HEK293 (cell line): ENCODE measurements at regions of chr15 and their contacts with region 1.

Region 1: GRCh38 chr15:75453703-75454470 is 2.4 kb upstream of the SIN3A start:
- H3K4me3 ChIP-seq: peak overlapping the region; percentile 70
- H3K27ac ChIP-seq: peak overlapping the region; percentile 87
- H3K4me1 ChIP-seq: peaks cover 15% of the 10 kb centered on the region
- CTCF ChIP-seq: no peak

Region 2: DNA sequence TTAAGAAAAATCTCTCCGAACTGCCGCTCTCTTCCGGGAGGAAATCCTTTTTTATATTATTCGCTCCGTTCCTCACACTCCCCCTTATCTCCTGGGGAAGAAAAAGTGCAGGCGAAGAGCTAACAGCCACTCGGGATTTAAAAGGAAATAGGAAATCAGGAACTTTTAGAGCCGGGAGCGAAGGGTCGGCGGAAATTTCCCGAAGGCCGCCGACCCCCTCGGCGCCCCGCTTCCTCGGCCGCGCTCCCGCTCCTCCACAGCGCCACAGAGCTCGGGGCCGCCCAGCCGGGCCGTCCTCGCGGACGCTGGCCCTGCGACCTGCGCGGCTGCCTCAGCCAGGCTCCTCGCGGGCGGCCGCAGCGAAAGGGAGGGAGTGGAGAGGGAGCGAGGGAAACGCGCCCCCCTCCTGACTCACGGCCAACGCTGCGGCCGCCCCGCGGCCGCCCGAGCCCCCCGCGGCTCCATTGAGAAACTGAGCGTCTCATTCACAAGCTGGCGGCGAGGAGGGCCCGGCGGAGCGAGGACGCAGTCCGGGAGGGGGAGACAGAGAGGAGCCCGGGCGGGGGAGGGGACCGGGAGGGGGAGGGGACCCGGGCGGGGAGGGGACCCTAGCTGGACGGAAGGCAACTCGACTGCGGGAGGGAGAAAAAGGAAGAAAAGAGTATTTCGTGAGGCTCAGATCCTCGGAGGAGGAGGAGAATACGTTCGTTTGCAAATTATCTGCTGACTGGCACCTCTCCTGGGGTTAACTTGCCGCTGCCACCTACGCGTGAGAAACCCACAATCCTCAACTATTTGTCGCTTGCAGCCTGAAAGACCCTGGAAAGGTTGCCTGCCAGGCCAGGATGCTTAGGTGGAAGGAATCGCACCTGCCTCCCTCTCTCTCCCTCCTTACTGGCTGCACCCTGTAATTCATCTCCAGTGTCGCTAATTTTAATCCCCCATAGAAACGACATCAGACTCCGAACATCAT is 125.3 kb after region 1 on chr15 and contains the start of gene PTPN9:
- CTCF ChIA-PET with region 1: interaction called, 6 read pairs
- POLR2A ChIA-PET with region 1: interaction called, 70 read pairs
- H3K4me3 ChIP-seq: peak within 1 kb of the TSS; percentile 84
- H3K27ac ChIP-seq: peak within 1 kb of the TSS; percentile 96
- H3K4me1 ChIP-seq: peaks cover 14% of the 10 kb centered on the region
- CTCF ChIP-seq: peak; percentile 79

Region 3: GRCh38 chr15:75625542-75626347 is 171.9 kb after region 1 on chr15 and contains the start of gene SNUPN:
- CTCF ChIA-PET with region 1: no interaction called
- POLR2A ChIA-PET with region 1: interaction called, 60 read pairs
- H3K4me3 ChIP-seq: peak within 1 kb of the TSS; percentile 96
- H3K27ac ChIP-seq: peak within 1 kb of the TSS; percentile 96
- H3K4me1 ChIP-seq: no peaks in the 10 kb centered on the region; the same call in 1 of the 2 replicates
- CTCF ChIP-seq: peak; percentile 6; the same call in 1 of the 2 replicates

Region 4: DNA sequence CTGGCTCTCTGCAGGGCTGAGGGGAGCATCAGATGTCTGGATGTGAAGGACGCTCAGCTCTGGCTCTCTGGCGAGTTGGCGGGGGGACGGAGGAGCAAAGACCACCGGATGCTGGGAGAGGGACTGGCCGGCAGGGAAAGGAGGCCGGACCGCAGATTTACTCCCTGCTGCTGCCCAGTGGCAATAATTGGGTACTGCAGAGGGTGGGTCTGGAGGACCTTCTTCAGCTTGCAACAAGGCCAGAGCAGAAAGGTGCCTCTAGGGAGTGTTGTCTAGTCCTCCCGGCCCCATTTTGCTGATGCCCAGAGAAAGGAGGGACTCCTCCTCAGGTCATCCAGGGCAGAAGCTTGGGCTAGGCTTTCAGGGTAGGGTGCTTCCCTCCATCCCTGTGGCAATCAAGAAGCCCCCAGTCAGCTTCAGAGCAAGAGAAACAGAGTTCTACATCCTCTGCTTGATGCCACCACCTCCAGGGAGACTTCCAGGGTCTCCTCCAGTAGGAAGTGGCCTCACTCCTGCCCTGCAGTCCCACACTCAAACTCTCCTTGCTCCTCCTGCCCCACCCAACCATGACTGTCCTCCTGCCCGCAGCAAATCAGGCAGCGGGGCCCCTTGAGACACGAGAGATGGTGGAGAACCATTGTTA is 279.0 kb after region 1 on chr15:
- CTCF ChIA-PET with region 1: interaction called, 3 read pairs
- POLR2A ChIA-PET with region 1: interaction called, 10 read pairs
- H3K4me3 ChIP-seq: no peak overlapping the region
- H3K27ac ChIP-seq: no peak overlapping the region
- H3K4me1 ChIP-seq: no peaks in the 10 kb centered on the region
- CTCF ChIP-seq: peak; percentile 83

Region 5: DNA sequence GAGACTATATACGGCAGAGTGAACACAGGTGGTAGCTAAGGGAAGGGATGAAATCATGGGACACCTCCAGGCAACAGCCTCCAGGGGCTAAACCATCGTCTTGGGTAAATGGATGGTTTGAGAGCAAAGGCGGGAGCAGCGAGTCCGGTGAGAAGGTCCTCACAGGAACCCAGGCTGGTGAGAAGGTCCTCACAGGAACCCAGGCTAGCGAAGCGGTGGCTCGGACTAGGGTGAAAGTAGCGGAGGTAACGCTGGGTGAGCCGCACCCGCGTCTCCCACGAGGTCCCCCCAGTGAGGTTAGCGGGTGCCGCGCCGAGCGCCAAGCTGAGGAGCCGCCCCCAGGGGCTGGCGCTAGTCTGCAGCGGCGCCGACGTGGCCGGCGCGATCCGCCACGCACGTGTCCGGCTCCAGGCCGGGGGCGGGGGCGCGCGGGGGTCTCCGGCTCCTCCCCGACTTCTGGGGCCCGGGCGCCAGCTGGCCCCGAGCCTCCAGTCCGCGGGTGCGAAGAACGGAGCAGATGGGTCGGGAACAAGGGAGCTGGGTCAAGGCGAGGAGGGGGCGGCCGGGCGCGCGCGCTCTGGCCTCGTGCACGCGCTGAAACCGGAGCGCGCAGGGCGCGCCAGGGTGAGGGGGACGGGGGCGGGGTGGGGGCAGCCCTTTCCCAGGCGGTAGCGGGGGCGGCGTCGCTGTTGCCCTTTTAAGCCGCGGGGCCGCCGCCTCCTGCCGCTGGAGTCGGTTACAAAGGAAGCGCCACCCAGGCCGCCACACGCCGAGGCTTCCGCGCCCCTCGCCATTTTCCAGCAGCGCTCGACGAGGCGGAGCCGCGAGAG is 389.1 kb after region 1 on chr15 and contains the start of gene UBE2Q2:
- CTCF ChIA-PET with region 1: no interaction called
- POLR2A ChIA-PET with region 1: no interaction called
- H3K4me3 ChIP-seq: peak within 1 kb of the TSS; percentile 86
- H3K27ac ChIP-seq: peak within 1 kb of the TSS; percentile 93
- H3K4me1 ChIP-seq: peaks cover 25% of the 10 kb centered on the region
- CTCF ChIP-seq: no peak